ENCODE measurements at regions of chr3 and their contacts with region 1.

Region 1: GRCh38 chr3:51498876-51499738 is 708 bp downstream of the DCAF1 start:
- DNase-seq: peak; percentile 70
- ATAC-seq: peak; percentile 84
- H3K4me3 ChIP-seq: peak overlapping the region; percentile 71
- H3K27ac ChIP-seq: peak overlapping the region; percentile 80
- H3K4me1 ChIP-seq: peaks cover 5% of the 10 kb centered on the region
- H3K27me3 ChIP-seq: no peaks in the 10 kb centered on the region
- CTCF ChIP-seq: no peak
- EP300 ChIP-seq: no peak
- POLR2A ChIP-seq: 0 out of 2 replicates have a peak, but pooled peaks have one; percentile 0
- RAD21 ChIP-seq: no peak

Region 2: GRCh38 chr3:50088725-50089608 is 1410.1 kb before region 1 on chr3 and contains the start of gene RBM5:
- CTCF ChIA-PET with region 1: no interaction called
- POLR2A ChIA-PET with region 1: interaction called, 11 read pairs
- RAD21 ChIA-PET with region 1: no interaction called
- SMC1A ChIA-PET with region 1: no interaction called
- in situ Hi-C with region 1: no loop called
- intact Hi-C with region 1: no loop called
- DNase-seq: peak; percentile 64
- ATAC-seq: peak; percentile 100
- H3K4me3 ChIP-seq: peak within 1 kb of the TSS; percentile 78
- H3K27ac ChIP-seq: peak within 1 kb of the TSS; percentile 99
- H3K4me1 ChIP-seq: no peaks in the 10 kb centered on the region; the same call in 1 of the 2 replicates
- H3K27me3 ChIP-seq: no peaks in the 10 kb centered on the region
- CTCF ChIP-seq: no peak
- EP300 ChIP-seq: no peak
- POLR2A ChIP-seq: peak; percentile 91
- RAD21 ChIP-seq: no peak
- polyA plus RNA-seq, gene RBM5: 35.1 to 48.1 TPM

Region 3: GRCh38 chr3:51391075-51391567 is 108.0 kb before region 1 on chr3 and contains the start of gene RBM15B:
- CTCF ChIA-PET with region 1: interaction called, 33 read pairs
- POLR2A ChIA-PET with region 1: interaction called, 26 read pairs
- RAD21 ChIA-PET with region 1: interaction called, 14 read pairs
- SMC1A ChIA-PET with region 1: interaction called, 6 read pairs
- in situ Hi-C with region 1: no loop called
- intact Hi-C with region 1: loop called (anchors 5 kb)
- DNase-seq: peak; percentile 80
- ATAC-seq: peak; percentile 96
- H3K4me3 ChIP-seq: peak within 1 kb of the TSS; percentile 83
- H3K27ac ChIP-seq: peak within 1 kb of the TSS; percentile 73
- H3K4me1 ChIP-seq: peaks cover 25% of the 10 kb centered on the region
- H3K27me3 ChIP-seq: no peaks in the 10 kb centered on the region
- CTCF ChIP-seq: peak; percentile 84 to 93 (median 93); a peak in 4 of 6 replicates
- EP300 ChIP-seq: 0 out of 4 replicates have a peak, but pooled peaks of 1 of the 2 experiments have one; percentile 12
- POLR2A ChIP-seq: peak; percentile 81
- RAD21 ChIP-seq: peak; percentile 44; the same call in 1 of the 2 replicates
- polyA plus RNA-seq, gene RBM15B: 2.4 to 3.0 TPM

Region 4: GRCh38 chr3:51519848-51520247 is 20.7 kb after region 1 on chr3:
- CTCF ChIA-PET with region 1: interaction called, 34 read pairs
- POLR2A ChIA-PET with region 1: no interaction called
- RAD21 ChIA-PET with region 1: interaction called, 4 read pairs
- SMC1A ChIA-PET with region 1: interaction called, 15 read pairs
- in situ Hi-C with region 1: no loop called
- intact Hi-C with region 1: no loop called
- DNase-seq: no peak
- ATAC-seq: no peak
- H3K4me3 ChIP-seq: no peak overlapping the region
- H3K27ac ChIP-seq: no peak overlapping the region
- H3K4me1 ChIP-seq: no peaks in the 10 kb centered on the region; the same call in 1 of the 2 replicates
- H3K27me3 ChIP-seq: no peaks in the 10 kb centered on the region
- CTCF ChIP-seq: no peak
- EP300 ChIP-seq: no peak
- POLR2A ChIP-seq: no peak
- RAD21 ChIP-seq: no peak

Region 5: DNA sequence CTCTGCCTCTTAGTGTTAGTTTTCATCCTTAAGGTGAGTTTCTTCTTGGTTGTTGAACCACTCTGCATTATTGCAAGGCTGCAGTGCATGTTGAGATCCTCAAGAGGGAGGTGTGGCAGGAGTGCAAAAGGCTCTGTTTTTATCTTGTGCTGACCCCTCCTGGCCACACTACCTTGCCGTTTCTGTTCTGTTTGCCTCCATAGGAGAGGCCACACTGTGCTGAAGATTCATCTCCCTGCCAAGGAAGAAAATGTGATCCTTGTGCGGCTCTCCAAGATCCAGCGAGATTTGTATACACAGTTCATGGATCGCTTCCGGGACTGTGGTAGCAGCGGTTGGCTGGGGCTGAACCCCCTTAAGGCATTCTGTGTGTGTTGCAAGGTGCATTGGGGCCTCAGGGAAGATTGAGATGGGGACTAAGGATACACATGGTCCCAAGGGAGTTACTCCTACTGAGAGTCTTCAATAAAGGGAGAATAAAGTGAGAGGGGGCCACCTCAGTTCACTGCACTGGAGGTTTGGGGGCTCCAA is 138.9 kb after region 1 on chr3:
- CTCF ChIA-PET with region 1: interaction called, 58 read pairs
- POLR2A ChIA-PET with region 1: no interaction called
- RAD21 ChIA-PET with region 1: interaction called, 45 read pairs
- SMC1A ChIA-PET with region 1: interaction called, 20 read pairs
- in situ Hi-C with region 1: loop called (anchors 10 kb)
- intact Hi-C with region 1: loop called (anchors 1 kb)
- DNase-seq: no peak
- ATAC-seq: peak; percentile 99
- H3K4me3 ChIP-seq: no peak overlapping the region
- H3K27ac ChIP-seq: no peak overlapping the region
- H3K4me1 ChIP-seq: no peaks in the 10 kb centered on the region
- H3K27me3 ChIP-seq: no peaks in the 10 kb centered on the region
- CTCF ChIP-seq: peak; percentile 86 to 97 (median 87); a peak in 5 of 6 replicates
- EP300 ChIP-seq: no peak
- POLR2A ChIP-seq: no peak
- RAD21 ChIP-seq: peak; percentile 66

Region 6: DNA sequence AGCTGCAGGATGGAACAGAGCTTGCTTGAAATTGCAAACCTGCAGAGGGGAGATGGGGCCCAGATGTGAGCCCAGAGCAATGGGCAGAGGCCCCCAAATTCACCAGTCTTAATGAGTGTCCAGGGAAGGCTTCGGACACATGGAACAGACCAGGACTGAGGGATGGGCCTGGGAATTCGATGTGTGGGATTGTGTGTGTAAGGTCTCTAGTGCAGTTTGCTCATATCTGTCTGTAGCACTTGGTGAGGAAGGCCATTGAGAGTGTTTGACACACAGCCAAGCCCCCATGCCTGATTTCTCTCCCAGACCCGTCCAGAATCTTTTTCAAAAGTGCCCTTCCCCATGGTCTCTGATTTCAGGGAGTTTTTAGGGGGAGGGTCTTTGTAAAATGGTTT is 189.1 kb after region 1 on chr3:
- CTCF ChIA-PET with region 1: interaction called, 243 read pairs
- POLR2A ChIA-PET with region 1: interaction called, 20 read pairs
- RAD21 ChIA-PET with region 1: interaction called, 182 read pairs
- SMC1A ChIA-PET with region 1: interaction called, 12 read pairs
- in situ Hi-C with region 1: loop called (anchors 5 kb)
- intact Hi-C with region 1: no loop called
- DNase-seq: no peak
- ATAC-seq: no peak
- H3K4me3 ChIP-seq: no peak overlapping the region
- H3K27ac ChIP-seq: no peak overlapping the region
- H3K4me1 ChIP-seq: peaks cover 16% of the 10 kb centered on the region
- H3K27me3 ChIP-seq: no peaks in the 10 kb centered on the region
- CTCF ChIP-seq: no peak
- EP300 ChIP-seq: no peak
- POLR2A ChIP-seq: no peak
- RAD21 ChIP-seq: no peak

Region 7: GRCh38 chr3:51916418-51916817 is 417.3 kb after region 1 on chr3:
- CTCF ChIA-PET with region 1: no interaction called
- POLR2A ChIA-PET with region 1: interaction called, 13 read pairs
- RAD21 ChIA-PET with region 1: no interaction called
- SMC1A ChIA-PET with region 1: no interaction called
- in situ Hi-C with region 1: no loop called
- intact Hi-C with region 1: no loop called
- DNase-seq: no peak
- ATAC-seq: no peak
- H3K4me3 ChIP-seq: no peak overlapping the region
- H3K27ac ChIP-seq: no peak overlapping the region
- H3K4me1 ChIP-seq: no peaks in the 10 kb centered on the region
- H3K27me3 ChIP-seq: no peaks in the 10 kb centered on the region
- CTCF ChIP-seq: no peak
- EP300 ChIP-seq: no peak
- POLR2A ChIP-seq: no peak
- RAD21 ChIP-seq: no peak

Region 8: GRCh38 chr3:52062499-52062898 is 563.4 kb after region 1 on chr3:
- CTCF ChIA-PET with region 1: no interaction called
- POLR2A ChIA-PET with region 1: no interaction called
- RAD21 ChIA-PET with region 1: no interaction called
- SMC1A ChIA-PET with region 1: no interaction called
- in situ Hi-C with region 1: no loop called
- intact Hi-C with region 1: no loop called
- DNase-seq: peak; percentile 42
- ATAC-seq: peak; percentile 66
- H3K4me3 ChIP-seq: no peak overlapping the region
- H3K27ac ChIP-seq: peak overlapping the region; percentile 35
- H3K4me1 ChIP-seq: peaks cover 28% of the 10 kb centered on the region
- H3K27me3 ChIP-seq: no peaks in the 10 kb centered on the region
- CTCF ChIP-seq: no peak
- EP300 ChIP-seq: no peak
- POLR2A ChIP-seq: no peak
- RAD21 ChIP-seq: no peak